Aorta (tissue), 5 donors: ENCODE measurements at regions of chr9 and their contacts with region 1.

Region 1: DNA sequence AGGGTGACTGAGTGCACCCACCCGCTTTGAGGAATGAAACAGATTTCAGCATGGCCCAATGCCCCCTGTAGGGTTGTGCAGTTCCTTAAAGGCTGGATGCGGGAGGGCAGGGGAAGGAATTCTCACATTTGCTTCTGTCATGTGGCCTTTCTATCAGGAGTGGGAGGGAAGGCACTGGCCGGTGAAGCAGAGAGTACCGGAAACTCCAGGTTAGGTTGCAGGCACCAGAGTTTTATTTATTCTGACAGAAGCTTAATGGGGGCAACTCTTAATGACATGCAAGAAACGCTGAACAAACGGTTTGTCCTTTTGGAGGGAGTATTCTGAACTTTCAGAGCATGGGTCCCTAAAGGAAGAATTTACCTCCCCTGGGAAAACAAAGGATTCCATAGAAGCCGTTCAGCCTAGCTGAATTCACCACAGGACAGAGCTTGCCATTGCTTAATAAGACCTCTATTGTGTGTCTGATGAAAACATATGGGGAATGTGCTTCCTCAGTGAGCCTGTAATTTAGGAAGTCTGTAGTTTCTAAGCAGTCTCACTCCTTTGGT is 44.1 kb upstream of the EQTN start:
- DNase-seq: no peak
- ATAC-seq: no peak
- H3K4me3 ChIP-seq: no peak overlapping the region
- H3K27ac ChIP-seq: peak overlapping the region; percentile 46 to 59
- H3K4me1 ChIP-seq: peaks cover 4 to 11% of the 10 kb centered on the region in 2 donors
- H3K27me3 ChIP-seq: no peaks in the 10 kb centered on the region

Region 2: DNA sequence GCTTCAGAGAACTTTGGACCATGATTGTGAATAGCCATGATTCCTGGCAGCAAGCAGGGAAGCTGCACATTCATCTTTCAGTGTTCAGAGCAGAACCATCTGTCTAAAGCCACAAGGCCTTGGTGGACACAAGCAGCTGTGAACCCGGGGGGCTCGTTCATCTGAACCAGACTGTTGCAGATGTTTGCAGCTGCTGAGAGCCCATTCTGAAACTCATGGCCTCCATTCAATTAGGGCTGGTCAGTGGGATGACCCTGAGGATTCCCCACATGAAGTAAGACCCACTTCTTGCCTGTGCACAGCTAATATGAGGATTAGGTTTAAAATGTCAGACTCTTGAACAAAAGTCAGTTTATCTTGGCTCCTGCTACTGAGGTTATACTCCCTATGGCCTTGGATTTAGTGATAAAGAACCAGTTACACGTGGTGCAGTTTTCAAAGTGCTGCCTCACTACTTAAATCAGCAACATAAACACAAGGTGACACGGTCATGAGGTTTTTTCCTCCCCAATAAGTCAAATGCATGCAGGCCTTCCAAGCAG is 73.3 kb after region 1 on chr9:
- intact Hi-C with region 1: loop called in 1 of 2 experiments (anchors 5 kb)
- DNase-seq: no peak
- ATAC-seq: peak; percentile 57
- H3K4me3 ChIP-seq: no peak overlapping the region
- H3K27ac ChIP-seq: no peak overlapping the region
- H3K4me1 ChIP-seq: peaks cover 4 to 15% of the 10 kb centered on the region in 2 donors
- H3K27me3 ChIP-seq: no peaks in the 10 kb centered on the region

Region 3: DNA sequence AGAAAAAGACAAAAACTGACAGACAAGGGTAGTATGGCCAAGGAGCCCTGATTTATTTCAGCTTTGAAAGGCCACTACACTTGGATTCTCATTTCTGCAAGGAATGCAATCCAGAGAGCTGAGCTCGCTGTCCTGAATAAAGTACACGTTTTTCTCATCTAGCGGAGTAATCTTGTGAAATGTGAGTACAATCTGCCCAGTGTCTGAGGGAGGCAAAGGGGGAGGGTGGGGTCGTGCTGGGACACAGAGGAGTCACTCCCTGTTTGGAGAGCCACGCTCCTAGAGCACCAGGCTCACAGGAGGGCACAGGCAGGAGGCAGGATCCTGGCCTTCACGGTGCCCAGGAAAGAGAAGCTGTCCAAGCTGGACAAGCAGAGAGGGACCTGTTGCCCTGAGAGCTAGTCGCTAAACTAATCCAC is 132.1 kb after region 1 on chr9:
- intact Hi-C with region 1: no loop called
- DNase-seq: peak; percentile 53 to 77
- ATAC-seq: peak; percentile 65
- H3K4me3 ChIP-seq: no peak overlapping the region
- H3K27ac ChIP-seq: no peak overlapping the region
- H3K4me1 ChIP-seq: peaks cover 2 to 3% of the 10 kb centered on the region in 2 donors
- H3K27me3 ChIP-seq: no peaks in the 10 kb centered on the region

Region 4: DNA sequence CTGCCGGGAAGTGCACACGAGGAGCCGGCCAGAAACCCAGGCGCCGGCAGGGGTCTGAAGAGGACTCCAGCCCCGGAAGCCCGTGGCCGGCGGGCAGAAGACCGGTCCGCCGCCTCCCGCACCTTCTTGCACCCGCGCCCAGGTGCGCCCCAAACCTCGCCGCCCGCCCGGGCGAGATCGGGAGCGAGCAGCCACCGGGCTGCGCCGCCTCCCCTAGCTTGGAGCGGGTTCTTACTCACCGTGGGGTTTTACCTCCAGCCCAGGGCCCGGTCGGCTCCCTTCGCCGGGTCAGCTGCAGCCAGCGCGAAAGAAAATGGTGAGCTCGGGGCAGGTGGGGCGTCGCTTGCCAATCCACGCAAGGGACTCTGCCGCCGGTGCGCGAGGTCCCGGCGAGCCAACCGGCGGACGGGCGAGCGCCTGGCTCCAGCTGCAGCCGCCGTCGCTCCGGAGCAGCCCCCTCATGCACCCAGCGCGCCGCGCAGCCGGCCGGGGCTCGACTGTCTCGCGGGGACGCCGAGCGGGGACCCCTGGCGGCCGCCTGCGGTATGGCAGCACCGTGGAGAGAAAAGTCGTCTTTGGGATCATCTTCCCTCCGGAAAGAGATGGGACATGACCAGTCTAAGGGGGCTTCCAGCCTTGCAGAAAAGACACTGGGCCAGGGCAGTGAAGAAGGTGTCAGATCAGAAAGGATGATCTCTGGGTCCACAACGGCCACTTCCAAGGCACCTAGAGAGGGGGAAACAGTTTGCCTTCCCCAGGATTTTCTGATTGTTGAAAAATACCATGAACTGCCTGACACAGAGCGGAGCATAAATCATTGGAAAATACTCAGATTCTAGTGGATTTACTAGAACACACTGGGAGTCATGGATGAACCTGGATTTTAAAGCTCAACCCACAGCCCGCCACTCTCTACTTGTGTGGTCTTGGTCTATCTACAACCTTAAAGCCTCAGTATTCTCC is 188.6 kb after region 1 on chr9 and contains the start of gene MOB3B:
- intact Hi-C with region 1: loop called (anchors 2 to 5 kb)
- DNase-seq: peak; percentile 87 to 95
- ATAC-seq: peak; percentile 94
- H3K4me3 ChIP-seq: peak within 1 kb of the TSS; percentile 46 to 87
- H3K27ac ChIP-seq: peak within 1 kb of the TSS; percentile 71 to 83
- H3K4me1 ChIP-seq: peaks cover 0 to 1% of the 10 kb centered on the region in 2 donors
- H3K27me3 ChIP-seq: no peaks in the 10 kb centered on the region
- total RNA-seq, gene MOB3B: 5.8 to 9.0 TPM